Transverse colon (tissue), 4 donors: ENCODE measurements at regions of chr17 and their contacts with region 1.

Region 1: GRCh38 chr17:49556223-49556971 is 19.3 kb upstream of the NXPH3 start:
- DNase-seq: peak; percentile 79
- H3K4me3 ChIP-seq: no peak overlapping the region
- H3K27ac ChIP-seq: no peak overlapping the region
- H3K4me1 ChIP-seq: peaks cover 3 to 8% (median 6%) of the 10 kb centered on the region in 4 donors
- H3K27me3 ChIP-seq: no peaks in the 10 kb centered on the region
- CTCF ChIP-seq: peak; percentile 91 to 99 (median 98)
- EP300 ChIP-seq: no peak
- POLR2A ChIP-seq: no peak

Region 2: DNA sequence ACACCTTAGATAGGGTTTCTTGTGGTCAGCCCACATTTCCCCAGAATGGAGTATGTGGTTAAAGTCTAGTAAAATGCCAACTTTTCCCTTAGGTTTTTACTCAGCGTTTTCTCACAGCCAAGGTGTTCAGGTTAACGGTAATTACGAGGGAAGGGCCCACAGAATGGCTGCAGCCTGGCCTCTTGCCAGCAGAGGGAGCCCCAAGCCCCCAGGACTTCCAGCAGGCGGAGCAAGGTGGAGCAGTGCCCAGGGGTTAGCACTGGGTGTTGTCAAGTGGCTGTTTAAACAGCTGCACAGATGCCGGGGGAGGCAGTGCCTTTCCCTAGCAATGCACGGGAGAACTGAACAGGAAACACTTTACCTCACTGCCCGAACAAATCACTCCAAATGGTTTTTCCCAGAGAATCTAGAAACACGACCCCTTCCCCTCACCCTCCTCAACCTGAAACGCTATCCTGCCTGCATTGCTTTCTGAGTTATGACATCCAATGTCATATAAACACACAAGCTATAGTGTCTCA is 148.4 kb before region 1 on chr17:
- in situ Hi-C with region 1: loop called in 2 of 4 experiments (anchors 10 kb)
- intact Hi-C with region 1: no loop called
- DNase-seq: peak; percentile 91
- H3K4me3 ChIP-seq: no peak overlapping the region
- H3K27ac ChIP-seq: peak overlapping the region; percentile 61 to 80 (median 68)
- H3K4me1 ChIP-seq: peaks cover 8 to 26% (median 15%) of the 10 kb centered on the region in 4 donors
- H3K27me3 ChIP-seq: no peaks in the 10 kb centered on the region
- CTCF ChIP-seq: peak; percentile 64 to 94 (median 83)
- EP300 ChIP-seq: no peak
- POLR2A ChIP-seq: peak; percentile 26

Region 3: GRCh38 chr17:49434821-49435670 is 121.4 kb before region 1 on chr17:
- in situ Hi-C with region 1: loop called in 3 of 4 experiments (anchors 10 kb)
- intact Hi-C with region 1: loop called (anchors 2 kb)
- DNase-seq: peak; percentile 31
- H3K4me3 ChIP-seq: no peak overlapping the region
- H3K27ac ChIP-seq: no peak overlapping the region
- H3K4me1 ChIP-seq: no peaks in the 10 kb centered on the region
- H3K27me3 ChIP-seq: peaks cover 28% of the 10 kb centered on the region
- CTCF ChIP-seq: peak; percentile 46 to 78 (median 68)
- EP300 ChIP-seq: no peak
- POLR2A ChIP-seq: no peak

Region 4: GRCh38 chr17:49454050-49454449 is 102.3 kb before region 1 on chr17:
- in situ Hi-C with region 1: no loop called
- intact Hi-C with region 1: no loop called
- DNase-seq: no peak
- H3K4me3 ChIP-seq: no peak overlapping the region
- H3K27ac ChIP-seq: no peak overlapping the region
- H3K4me1 ChIP-seq: no peaks in the 10 kb centered on the region
- H3K27me3 ChIP-seq: peaks cover 19% of the 10 kb centered on the region
- CTCF ChIP-seq: no peak
- EP300 ChIP-seq: no peak
- POLR2A ChIP-seq: no peak